Dendritic cell treated with granulocyte-macrophage colony-stimulating factor and Interleukin-4, amounts not matched to agents 40 ng/mL and 50 ng/mL, for 4 days (primary cell): ENCODE measurements at regions of chr22 and their contacts with region 1.

Region 1: DNA sequence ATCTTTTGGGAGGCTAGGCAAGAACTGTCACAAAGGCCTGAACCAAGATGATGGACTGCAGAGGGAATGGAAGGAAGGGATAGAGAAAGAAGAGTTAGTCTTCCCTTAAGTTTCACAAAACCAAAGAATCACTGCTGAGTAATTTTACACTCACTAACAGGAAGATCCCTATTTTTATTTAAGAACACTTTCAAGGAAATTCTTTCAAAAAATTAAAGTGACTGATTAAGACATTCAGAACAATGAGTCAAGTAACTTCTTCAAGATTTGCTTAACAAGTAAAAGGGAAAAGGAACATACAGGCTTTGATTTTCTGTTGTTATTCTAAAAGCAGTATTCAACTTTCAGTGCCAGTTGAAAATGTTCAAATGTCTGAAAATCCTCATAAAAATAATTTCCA is 3.1 kb downstream of the PITPNB start:
- H3K4me3 Mint-ChIP-seq: peak overlapping the region; percentile 11
- H3K27ac Mint-ChIP-seq: peak overlapping the region; percentile 49
- H3K4me1 Mint-ChIP-seq: peaks cover 74% of the 10 kb centered on the region
- H3K27me3 Mint-ChIP-seq: no peaks in the 10 kb centered on the region

Region 2: DNA sequence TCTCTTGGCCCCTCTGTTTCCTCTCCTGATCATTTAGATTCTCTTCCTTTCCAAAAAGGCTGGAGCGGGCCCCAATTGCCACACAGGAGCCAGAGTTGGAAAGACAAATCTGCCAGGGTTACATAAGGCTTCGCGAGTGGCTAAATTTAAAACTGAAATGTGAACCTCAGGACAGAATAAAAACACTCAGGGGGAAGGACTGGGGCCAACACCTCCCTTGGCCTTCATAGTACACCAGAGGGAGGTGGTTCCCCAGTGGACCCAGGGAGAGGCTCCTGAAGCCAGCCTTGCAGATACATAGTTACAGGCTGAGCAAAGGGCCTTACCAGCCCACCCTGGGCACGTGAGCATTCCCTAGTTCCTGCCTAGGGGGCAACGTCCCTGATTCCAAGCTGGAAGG is 264.5 kb before region 1 on chr22:
- intact Hi-C with region 1: no loop called
- H3K4me3 Mint-ChIP-seq: no peak overlapping the region
- H3K27ac Mint-ChIP-seq: no peak overlapping the region
- H3K4me1 Mint-ChIP-seq: no peaks in the 10 kb centered on the region
- H3K27me3 Mint-ChIP-seq: no peaks in the 10 kb centered on the region

Region 3: GRCh38 chr22:27895600-27895999 is 20.4 kb before region 1 on chr22:
- intact Hi-C with region 1: loop called (anchors 2 kb)
- H3K4me3 Mint-ChIP-seq: no peak overlapping the region
- H3K27ac Mint-ChIP-seq: no peak overlapping the region
- H3K4me1 Mint-ChIP-seq: no peaks in the 10 kb centered on the region
- H3K27me3 Mint-ChIP-seq: no peaks in the 10 kb centered on the region

Region 4: DNA sequence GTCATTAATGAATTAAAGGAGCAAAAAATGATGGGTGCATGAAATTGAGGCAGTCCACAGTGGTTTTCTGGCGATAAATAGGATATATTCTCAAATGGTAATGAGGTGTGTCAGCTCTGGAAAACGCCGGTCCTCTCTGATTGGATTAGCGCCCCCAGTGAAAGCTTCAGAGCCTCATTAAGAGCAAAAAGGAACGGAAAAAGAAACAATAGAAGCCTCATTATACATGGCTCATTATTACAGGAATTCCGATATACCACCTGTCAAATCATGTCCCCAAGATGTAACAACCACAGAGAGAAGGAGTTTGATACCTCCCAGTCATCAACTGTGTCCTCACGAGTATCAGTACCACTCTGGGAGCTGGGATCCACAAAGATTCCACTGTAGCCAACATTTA is 178.8 kb after region 1 on chr22:
- intact Hi-C with region 1: no loop called
- H3K4me3 Mint-ChIP-seq: no peak overlapping the region
- H3K27ac Mint-ChIP-seq: no peak overlapping the region
- H3K4me1 Mint-ChIP-seq: no peaks in the 10 kb centered on the region
- H3K27me3 Mint-ChIP-seq: no peaks in the 10 kb centered on the region

Region 5: DNA sequence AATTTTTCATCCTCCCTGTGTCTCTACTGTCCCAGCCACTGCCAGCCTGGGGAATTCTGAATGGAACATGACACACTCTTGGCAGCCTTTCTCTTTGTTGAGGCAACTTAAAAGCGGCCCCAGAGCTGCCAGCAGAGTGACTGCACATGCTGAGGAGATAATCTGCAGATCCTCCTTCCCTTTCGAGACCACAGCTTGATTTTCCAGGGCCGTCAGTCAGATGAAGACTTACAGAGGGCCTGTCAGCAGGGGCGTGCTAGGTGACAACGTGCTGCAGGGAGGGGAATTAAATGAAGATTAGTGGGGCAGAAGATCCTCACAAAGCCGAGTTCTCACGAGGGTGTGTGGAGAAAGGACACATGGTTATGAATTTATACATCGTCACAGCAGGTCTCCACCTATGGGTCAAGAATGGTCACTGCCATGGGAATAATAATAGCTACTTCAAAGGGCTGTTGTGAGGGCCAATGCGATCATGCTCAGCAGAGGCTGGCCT is 196.6 kb after region 1 on chr22:
- intact Hi-C with region 1: no loop called
- H3K4me3 Mint-ChIP-seq: no peak overlapping the region
- H3K27ac Mint-ChIP-seq: no peak overlapping the region
- H3K4me1 Mint-ChIP-seq: peaks cover 12% of the 10 kb centered on the region
- H3K27me3 Mint-ChIP-seq: no peaks in the 10 kb centered on the region